Activated CD4-positive, alpha-beta memory T cell treated with anti-CD3 and anti-CD28 coated beads for 36 hours (primary cell): ENCODE measurements at regions of chr7 and their contacts with region 1.

Region 1: DNA sequence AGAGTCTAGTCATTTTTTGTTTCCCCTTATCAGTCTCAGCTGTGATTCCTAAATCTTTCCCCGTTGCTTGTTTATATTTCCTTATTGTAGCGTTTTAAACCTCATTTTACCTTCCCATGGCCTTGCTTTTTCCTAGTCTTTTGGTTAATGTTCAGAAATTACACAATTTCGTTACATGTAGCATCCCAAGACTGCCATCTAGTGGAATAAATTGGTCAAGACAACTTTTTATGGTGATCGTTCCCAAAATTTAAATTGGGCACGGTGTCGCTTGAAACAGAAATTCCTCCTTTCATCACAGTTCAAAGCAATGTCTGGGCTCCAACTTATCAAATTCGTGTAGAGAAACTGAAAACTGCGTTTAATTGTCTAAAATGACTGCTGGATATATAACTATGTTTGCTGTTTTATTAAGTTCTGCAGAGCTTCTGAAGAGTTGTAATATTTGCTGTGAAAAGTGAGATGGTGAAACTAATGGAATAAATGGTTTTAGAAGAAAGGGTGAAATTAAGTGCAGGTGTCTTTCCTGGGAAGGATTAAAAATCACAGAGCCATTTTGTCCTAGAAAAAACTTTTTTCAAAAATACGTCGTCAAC is 370.2 kb downstream of the PHF14 start:
- DNase-seq: no peak
- H3K4me3 Mint-ChIP-seq: no peak overlapping the region
- H3K27ac Mint-ChIP-seq: no peak overlapping the region
- H3K4me1 Mint-ChIP-seq: peaks cover 7% of the 10 kb centered on the region
- H3K27me3 Mint-ChIP-seq: peaks cover 8% of the 10 kb centered on the region

Region 2: GRCh38 chr7:10156972-10157371 is 1186.9 kb before region 1 on chr7:
- CTCF ChIA-PET with region 1: no interaction called
- POLR2A ChIA-PET with region 1: no interaction called
- intact Hi-C with region 1: loop called (anchors 10 kb)
- DNase-seq: no peak
- H3K4me3 Mint-ChIP-seq: no peak overlapping the region
- H3K27ac Mint-ChIP-seq: no peak overlapping the region
- H3K4me1 Mint-ChIP-seq: no peaks in the 10 kb centered on the region
- H3K27me3 Mint-ChIP-seq: no peaks in the 10 kb centered on the region

Region 3: GRCh38 chr7:10300577-10300976 is 1043.3 kb before region 1 on chr7:
- CTCF ChIA-PET with region 1: no interaction called
- POLR2A ChIA-PET with region 1: no interaction called
- intact Hi-C with region 1: no loop called
- DNase-seq: no peak
- H3K4me3 Mint-ChIP-seq: no peak overlapping the region
- H3K27ac Mint-ChIP-seq: no peak overlapping the region
- H3K4me1 Mint-ChIP-seq: no peaks in the 10 kb centered on the region
- H3K27me3 Mint-ChIP-seq: no peaks in the 10 kb centered on the region

Region 4: DNA sequence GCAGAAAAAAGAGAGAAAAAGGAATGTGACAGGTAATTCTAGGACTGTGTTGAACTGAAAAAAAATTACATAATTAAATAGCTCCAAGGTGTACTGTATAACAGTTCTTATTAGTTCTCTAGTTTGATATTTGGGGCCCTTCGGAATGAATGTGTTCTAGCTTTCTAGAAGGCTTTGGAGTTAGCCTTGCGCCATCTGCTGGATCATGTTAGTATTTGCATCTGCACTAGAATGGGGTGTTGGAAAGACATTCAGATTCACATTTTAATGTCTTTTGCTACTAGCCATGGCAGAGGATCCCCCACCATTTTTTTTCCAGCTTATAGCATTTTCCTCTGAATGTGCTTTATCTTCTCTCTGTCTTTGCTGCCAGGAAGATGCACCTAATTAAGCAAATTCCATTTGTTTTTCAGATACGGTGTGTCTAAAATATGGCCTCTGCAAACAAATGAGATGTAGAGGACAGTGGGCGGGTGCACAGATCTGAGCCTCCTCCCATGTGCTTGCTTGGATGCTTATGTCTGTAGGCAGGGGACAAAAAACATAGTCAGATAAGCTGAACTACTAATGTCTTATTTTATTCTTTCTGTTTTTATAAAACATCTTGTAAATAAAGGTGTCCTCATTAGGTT is 131.7 kb before region 1 on chr7:
- CTCF ChIA-PET with region 1: interaction called, 4 read pairs
- POLR2A ChIA-PET with region 1: no interaction called
- intact Hi-C with region 1: loop called (anchors 5 kb)
- DNase-seq: peak; percentile 52
- H3K4me3 Mint-ChIP-seq: no peak overlapping the region
- H3K27ac Mint-ChIP-seq: no peak overlapping the region
- H3K4me1 Mint-ChIP-seq: peaks cover 2% of the 10 kb centered on the region
- H3K27me3 Mint-ChIP-seq: peaks cover 6% of the 10 kb centered on the region